ENCODE measurements at regions of chr20 and their contacts with region 1.

Region 1: GRCh38 chr20:431012-431904 is 23.2 kb downstream of the RBCK1 start:
- DNase-seq: peak; percentile 68
- ATAC-seq: peak; percentile 74
- H3K4me3 ChIP-seq: no peak overlapping the region
- H3K27ac ChIP-seq: no peak overlapping the region
- H3K4me1 ChIP-seq: no peaks in the 10 kb centered on the region
- H3K27me3 ChIP-seq: no peaks in the 10 kb centered on the region
- CTCF ChIP-seq: peak; percentile 58
- POLR2A ChIP-seq: no peak
- RAD21 ChIP-seq: peak; percentile 56

Region 2: GRCh38 chr20:112396-112795 is 318.9 kb before region 1 on chr20:
- CTCF ChIA-PET with region 1: no interaction called
- POLR2A ChIA-PET with region 1: no interaction called
- dilution Hi-C with region 1: no loop called
- in situ Hi-C with region 1: no loop called
- intact Hi-C with region 1: no loop called
- DNase-seq: no peak
- ATAC-seq: no peak
- H3K4me3 ChIP-seq: no peak overlapping the region
- H3K27ac ChIP-seq: no peak overlapping the region
- H3K4me1 ChIP-seq: no peaks in the 10 kb centered on the region
- H3K27me3 ChIP-seq: no peaks in the 10 kb centered on the region
- CTCF ChIP-seq: no peak
- POLR2A ChIP-seq: no peak
- RAD21 ChIP-seq: no peak

Region 3: GRCh38 chr20:219290-220115 is 211.8 kb before region 1 on chr20:
- CTCF ChIA-PET with region 1: no interaction called
- POLR2A ChIA-PET with region 1: no interaction called
- dilution Hi-C with region 1: no loop called
- in situ Hi-C with region 1: no loop called
- intact Hi-C with region 1: no loop called
- DNase-seq: peak; percentile 7
- ATAC-seq: peak; percentile 75
- H3K4me3 ChIP-seq: no peak overlapping the region
- H3K27ac ChIP-seq: no peak overlapping the region
- H3K4me1 ChIP-seq: no peaks in the 10 kb centered on the region
- H3K27me3 ChIP-seq: peaks cover 3% of the 10 kb centered on the region
- CTCF ChIP-seq: peak; percentile 43
- POLR2A ChIP-seq: no peak
- RAD21 ChIP-seq: peak; percentile 43

Region 4: GRCh38 chr20:419556-420168 is 11.6 kb before region 1 on chr20:
- CTCF ChIA-PET with region 1: no interaction called
- POLR2A ChIA-PET with region 1: no interaction called
- dilution Hi-C with region 1: no loop called
- in situ Hi-C with region 1: no loop called
- intact Hi-C with region 1: no loop called
- DNase-seq: no peak
- ATAC-seq: no peak
- H3K4me3 ChIP-seq: no peak overlapping the region
- H3K27ac ChIP-seq: no peak overlapping the region
- H3K4me1 ChIP-seq: peaks cover 3% of the 10 kb centered on the region; the same call in 1 of the 2 replicates
- H3K27me3 ChIP-seq: no peaks in the 10 kb centered on the region
- CTCF ChIP-seq: no peak
- POLR2A ChIP-seq: no peak
- RAD21 ChIP-seq: no peak

Region 5: DNA sequence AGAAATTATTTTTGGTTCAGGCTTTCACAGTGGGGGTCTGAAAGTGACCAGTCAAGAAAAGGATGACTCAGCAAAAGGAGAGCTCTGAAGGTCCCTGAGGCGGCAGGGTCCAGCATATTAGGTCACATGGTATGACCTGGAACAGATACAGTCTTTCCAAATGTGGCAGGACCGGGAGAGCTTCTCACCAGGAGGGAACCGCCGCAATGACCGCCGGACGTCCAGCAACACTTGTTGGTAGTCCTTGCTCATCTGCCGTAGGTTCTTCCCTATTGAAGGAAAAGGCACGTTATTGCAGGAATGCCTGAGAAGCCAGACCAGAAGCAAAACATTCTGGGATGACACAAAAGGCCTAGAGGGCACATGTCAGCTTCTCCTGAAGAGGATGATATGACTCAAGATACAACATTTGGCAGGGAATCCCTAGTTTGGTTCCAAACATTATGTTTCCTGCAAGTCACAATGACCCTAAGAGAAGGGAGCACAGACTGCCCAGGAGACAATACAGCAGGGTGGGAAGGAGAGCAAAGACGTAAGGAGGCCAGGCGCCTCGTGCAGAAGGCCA is 13.7 kb after region 1 on chr20:
- CTCF ChIA-PET with region 1: no interaction called
- POLR2A ChIA-PET with region 1: no interaction called
- dilution Hi-C with region 1: no loop called
- in situ Hi-C with region 1: no loop called
- intact Hi-C with region 1: loop called (anchors 2 kb)
- DNase-seq: peak; percentile 60
- ATAC-seq: peak; percentile 72
- H3K4me3 ChIP-seq: no peak overlapping the region
- H3K27ac ChIP-seq: peak overlapping the region; percentile 10; the same call in 1 of the 2 replicates
- H3K4me1 ChIP-seq: peaks cover 5% of the 10 kb centered on the region
- H3K27me3 ChIP-seq: no peaks in the 10 kb centered on the region
- CTCF ChIP-seq: no peak
- POLR2A ChIP-seq: no peak
- RAD21 ChIP-seq: no peak

Region 6: DNA sequence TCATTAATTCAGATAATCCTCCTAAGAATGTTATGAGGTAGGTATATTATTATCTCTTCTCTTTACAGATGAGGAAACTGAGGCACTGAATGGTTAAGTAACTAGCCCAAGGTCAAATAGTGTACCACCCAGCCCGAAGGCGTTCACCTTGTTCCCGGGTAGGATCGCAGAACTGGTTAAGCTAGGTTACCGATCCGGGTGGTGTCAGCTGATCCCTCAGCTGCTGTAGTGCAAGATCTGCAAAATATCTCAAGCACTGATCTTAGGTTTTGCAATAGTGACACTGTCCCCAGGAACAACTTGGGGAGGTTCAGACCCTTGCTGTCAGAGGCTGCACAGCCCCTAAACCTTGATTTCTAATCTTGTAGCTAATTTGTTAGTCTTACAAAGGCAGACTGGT is 308.9 kb after region 1 on chr20:
- CTCF ChIA-PET with region 1: no interaction called
- POLR2A ChIA-PET with region 1: no interaction called
- dilution Hi-C with region 1: no loop called
- in situ Hi-C with region 1: no loop called
- intact Hi-C with region 1: loop called (anchors 1 kb)
- DNase-seq: no peak
- ATAC-seq: no peak
- H3K4me3 ChIP-seq: no peak overlapping the region
- H3K27ac ChIP-seq: no peak overlapping the region
- H3K4me1 ChIP-seq: no peaks in the 10 kb centered on the region
- H3K27me3 ChIP-seq: peaks cover 10% of the 10 kb centered on the region
- CTCF ChIP-seq: no peak
- POLR2A ChIP-seq: no peak
- RAD21 ChIP-seq: no peak

Region 7: DNA sequence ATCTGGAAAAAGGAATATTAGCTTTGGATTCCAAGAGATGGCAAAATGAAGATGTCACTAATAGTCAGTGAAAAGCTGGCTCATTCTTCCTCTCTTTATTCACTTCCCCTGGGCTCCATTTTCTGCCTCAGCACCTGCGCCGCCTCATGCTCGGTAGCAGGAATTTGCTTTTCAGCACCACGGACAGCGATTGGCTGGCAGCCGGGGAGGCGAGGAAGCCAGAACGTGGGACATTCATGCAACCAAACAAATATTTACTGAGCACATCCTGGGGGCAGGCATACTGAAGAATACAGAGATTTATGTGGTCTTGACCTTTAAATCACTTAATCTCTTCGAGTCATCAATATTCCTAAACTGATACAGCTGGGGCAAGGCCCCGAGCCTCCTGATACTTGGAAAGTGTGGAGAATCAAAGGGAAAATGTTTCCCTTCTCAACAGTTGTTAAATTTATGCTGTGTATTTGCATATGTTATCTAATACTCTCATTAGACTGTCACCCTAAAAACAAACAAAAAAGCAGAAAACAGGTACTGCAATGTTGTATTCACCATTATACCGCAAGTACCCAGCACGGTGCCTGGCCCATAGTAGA is 1574.7 kb after region 1 on chr20:
- CTCF ChIA-PET with region 1: no interaction called
- POLR2A ChIA-PET with region 1: no interaction called
- dilution Hi-C with region 1: no loop called
- in situ Hi-C with region 1: no loop called
- intact Hi-C with region 1: no loop called
- DNase-seq: peak; percentile 45
- ATAC-seq: no peak; the same call in none of the 2 replicates
- H3K4me3 ChIP-seq: no peak overlapping the region
- H3K27ac ChIP-seq: no peak overlapping the region
- H3K4me1 ChIP-seq: no peaks in the 10 kb centered on the region
- H3K27me3 ChIP-seq: peaks cover 2% of the 10 kb centered on the region
- CTCF ChIP-seq: no peak
- POLR2A ChIP-seq: no peak
- RAD21 ChIP-seq: no peak